T-cell (primary cell): ENCODE measurements at regions of chr16 and their contacts with region 1.

Region 1: GRCh38 chr16:28597692-28598261 is 927 bp upstream of the SULT1A2 start:
- DNase-seq: no peak
- ATAC-seq: no peak
- H3K4me3 ChIP-seq: no peak overlapping the region
- H3K4me3 Mint-ChIP-seq: no peak overlapping the region
- H3K27ac ChIP-seq: no peak overlapping the region
- H3K27ac Mint-ChIP-seq: no peak overlapping the region
- H3K4me1 ChIP-seq: peaks cover 2% of the 10 kb centered on the region in 2 experiments
- H3K4me1 Mint-ChIP-seq: no peaks in the 10 kb centered on the region
- H3K27me3 ChIP-seq: peaks cover 0 to 3% of the 10 kb centered on the region in 2 experiments
- H3K27me3 Mint-ChIP-seq: no peaks in the 10 kb centered on the region

Region 2: DNA sequence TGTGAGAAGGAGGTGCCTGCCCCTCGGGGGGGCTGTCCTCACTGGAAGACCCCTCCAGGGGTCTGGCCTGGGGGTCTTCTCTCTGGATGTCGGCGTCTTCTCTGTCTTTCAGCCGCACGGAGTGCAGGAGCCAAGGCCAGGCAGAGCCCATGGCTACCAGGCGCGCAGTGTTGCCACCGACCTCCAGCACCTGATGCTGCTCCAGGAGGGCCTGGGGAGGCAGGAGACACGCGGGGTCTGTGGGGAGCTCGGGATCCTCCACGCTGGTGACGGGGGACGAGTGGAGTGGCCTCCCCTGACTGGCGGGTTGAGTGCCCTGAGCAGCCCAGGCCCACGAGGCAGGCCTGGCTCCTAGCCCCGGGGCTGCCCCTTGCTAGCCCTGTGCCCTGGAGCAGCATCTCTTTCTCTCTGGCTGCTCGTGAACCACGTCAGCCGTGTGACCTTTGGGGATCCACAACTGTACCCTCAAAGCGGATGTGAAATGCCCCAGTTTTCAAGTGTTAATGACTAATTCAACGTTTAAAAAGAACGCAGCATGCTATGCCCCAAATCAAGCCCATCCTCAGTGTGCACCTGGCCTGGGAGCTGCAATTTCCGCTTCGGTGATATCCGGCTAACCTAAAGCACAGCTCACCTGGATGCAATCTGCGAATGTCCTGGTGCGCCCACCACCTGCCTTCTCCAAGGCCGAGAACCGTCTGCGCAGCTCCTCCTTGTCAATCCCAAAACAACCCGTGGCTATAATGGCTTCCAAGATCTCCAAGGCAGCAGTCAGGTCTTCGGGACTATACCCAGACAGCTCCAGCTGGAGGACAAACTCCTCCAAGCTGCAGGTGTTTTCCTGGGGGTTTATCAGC is 1132.9 kb before region 1 on chr16:
- CTCF ChIA-PET with region 1: no interaction called
- POLR2A ChIA-PET with region 1: interaction called in 1 of 2 experiments, 11 read pairs
- DNase-seq: peak in 13 of 35 experiments; percentile 14 to 66 (median 35)
- ATAC-seq: peak in 1 of 4 experiments; percentile 17
- H3K4me3 ChIP-seq: peak overlapping the region in 1 of 2 donors; percentile 56
- H3K4me3 Mint-ChIP-seq: peak overlapping the region in 2 of 3 donors; percentile 41 to 74
- H3K27ac ChIP-seq: peak overlapping the region; percentile 93
- H3K27ac Mint-ChIP-seq: peak overlapping the region; percentile 81 to 96
- H3K4me1 ChIP-seq: peaks cover 11 to 61% of the 10 kb centered on the region in 2 experiments
- H3K4me1 Mint-ChIP-seq: peaks cover 16 to 56% (median 52%) of the 10 kb centered on the region in 3 donors
- H3K27me3 ChIP-seq: no peaks in the 10 kb centered on the region
- H3K27me3 Mint-ChIP-seq: no peaks in the 10 kb centered on the region